H1 (cell line): ENCODE measurements at regions of chr5 and their contacts with region 1.

Region 1: DNA sequence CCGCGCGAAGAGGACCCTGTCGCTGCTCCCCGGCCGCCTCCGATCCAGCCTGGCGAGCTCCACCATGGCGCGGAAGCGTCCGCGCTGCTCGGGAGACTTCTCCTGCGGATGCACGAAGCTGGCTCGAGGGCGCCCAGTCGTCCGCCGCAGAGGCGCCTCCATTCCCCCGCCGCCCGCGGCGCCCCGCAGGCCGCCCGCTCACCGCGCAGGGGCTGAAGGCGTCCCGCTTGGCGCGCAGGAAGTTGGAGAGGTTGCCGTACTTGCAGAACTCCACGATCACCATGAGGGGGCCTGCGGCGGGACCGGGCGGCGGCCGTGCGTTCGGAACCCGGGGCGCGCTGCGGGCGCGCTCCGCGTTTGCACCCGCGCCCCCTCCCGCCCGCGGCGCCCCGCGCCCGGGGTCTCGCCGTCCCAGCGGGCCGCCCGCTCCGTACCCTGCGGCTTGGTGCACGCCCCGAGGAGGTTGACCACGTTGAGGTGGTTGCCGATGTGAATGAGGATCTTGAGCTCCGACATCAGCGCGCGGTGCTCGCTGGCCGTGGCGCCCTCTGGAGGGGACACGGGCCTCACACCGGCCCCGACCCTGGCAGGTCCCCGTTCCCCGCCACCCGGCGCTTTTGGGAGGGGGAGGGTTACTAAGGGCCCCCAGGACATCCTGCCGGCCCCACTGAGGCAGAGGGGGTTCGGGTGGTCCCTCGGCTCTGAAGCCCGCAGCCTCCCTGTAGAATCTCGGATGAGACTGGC is 27.7 kb upstream of the SCGB3A1 start:
- DNase-seq: peak; percentile 15 to 85
- H3K4me3 ChIP-seq: peak overlapping the region; percentile 47 to 74 (median 62)
- H3K27ac ChIP-seq: no peak overlapping the region
- H3K4me1 ChIP-seq: peaks cover 0 to 4% (median 1%) of the 10 kb centered on the region in 4 experiments; a peak in 4 of 7 replicates
- H3K27me3 ChIP-seq: peaks cover 0 to 13% (median 7%) of the 10 kb centered on the region in 4 experiments; a peak in 5 of 7 replicates
- CTCF ChIP-seq: peak in 2 of 3 experiments; percentile 64 to 69; a peak in 3 of 4 replicates
- EP300 ChIP-seq: no peak
- POLR2A ChIP-seq: no peak
- RAD21 ChIP-seq: peak; percentile 4 to 21; a peak in 2 of 4 replicates

Region 2: GRCh38 chr5:180639741-180640610 is 21.0 kb after region 1 on chr5:
- CTCF ChIA-PET with region 1: interaction called, 22 read pairs
- POLR2A ChIA-PET with region 1: no interaction called
- DNase-seq: peak in 1 of 2 experiments; percentile 38
- H3K4me3 ChIP-seq: no peak overlapping the region
- H3K27ac ChIP-seq: no peak overlapping the region
- H3K4me1 ChIP-seq: no peaks in the 10 kb centered on the region
- H3K27me3 ChIP-seq: no peaks in the 10 kb centered on the region
- CTCF ChIP-seq: no peak
- EP300 ChIP-seq: no peak
- POLR2A ChIP-seq: no peak
- RAD21 ChIP-seq: no peak

Region 3: GRCh38 chr5:180658774-180659564 is 40.0 kb after region 1 on chr5:
- CTCF ChIA-PET with region 1: interaction called, 14 read pairs
- POLR2A ChIA-PET with region 1: no interaction called
- DNase-seq: no peak
- H3K4me3 ChIP-seq: peak overlapping the region; percentile 24 to 55 (median 40); a peak in 7 of 8 replicates
- H3K27ac ChIP-seq: no peak overlapping the region
- H3K4me1 ChIP-seq: peaks cover 0 to 2% (median 0%) of the 10 kb centered on the region in 4 experiments; a peak in 3 of 7 replicates
- H3K27me3 ChIP-seq: peaks cover 0 to 4% (median 3%) of the 10 kb centered on the region in 4 experiments; a peak in 4 of 7 replicates
- CTCF ChIP-seq: no peak
- EP300 ChIP-seq: no peak
- POLR2A ChIP-seq: no peak
- RAD21 ChIP-seq: no peak

Region 4: GRCh38 chr5:180908998-180909731 is 290.2 kb after region 1 on chr5:
- CTCF ChIA-PET with region 1: no interaction called
- POLR2A ChIA-PET with region 1: no interaction called
- DNase-seq: no peak
- H3K4me3 ChIP-seq: no peak overlapping the region
- H3K27ac ChIP-seq: no peak overlapping the region
- H3K4me1 ChIP-seq: peaks cover 0 to 8% (median 6%) of the 10 kb centered on the region in 4 experiments; a peak in 5 of 7 replicates
- H3K27me3 ChIP-seq: no peaks in the 10 kb centered on the region
- CTCF ChIP-seq: no peak
- EP300 ChIP-seq: no peak
- POLR2A ChIP-seq: no peak
- RAD21 ChIP-seq: no peak